Activated CD4-positive, alpha-beta memory T cell treated with anti-CD3 and anti-CD28 coated beads for 36 hours (primary cell): ENCODE measurements at regions of chrX and their contacts with region 1.

Region 1: DNA sequence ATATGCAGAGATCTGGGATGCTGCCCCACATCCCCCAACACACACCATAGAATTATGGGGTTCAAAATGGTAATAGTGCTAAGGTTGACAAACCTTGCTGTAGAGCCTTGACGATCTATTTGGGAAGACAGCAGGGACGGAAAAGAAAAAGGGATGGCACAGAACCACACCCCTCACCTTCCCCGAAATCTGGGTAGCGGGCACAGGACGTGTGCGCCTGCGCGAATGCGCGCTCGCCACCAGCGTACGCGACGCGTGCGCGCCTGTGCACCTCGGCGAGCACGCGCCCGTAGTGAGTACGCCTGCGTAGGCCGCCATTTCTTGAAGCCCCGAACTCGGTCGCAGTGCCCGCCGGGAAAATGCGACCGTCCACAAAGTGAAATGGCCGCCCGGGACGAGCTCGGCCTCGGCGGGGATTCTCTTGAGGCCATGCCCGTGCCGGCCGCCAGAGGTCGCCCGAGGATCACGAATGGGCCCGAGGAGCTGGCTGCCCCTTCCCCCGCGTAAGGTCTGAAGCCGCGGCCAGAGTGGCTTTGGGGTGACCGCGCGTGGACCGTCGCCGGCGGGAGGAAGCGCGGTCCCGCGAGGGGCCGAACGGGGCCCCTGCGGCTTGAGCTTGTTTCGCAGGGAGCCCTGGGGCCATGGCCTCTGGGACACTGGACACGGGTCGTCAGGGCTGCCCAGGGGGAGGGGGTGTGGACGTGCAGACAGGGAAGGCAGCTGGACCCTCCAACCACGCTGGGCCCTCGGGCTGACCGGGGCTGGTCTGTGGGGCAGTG is 43.6 kb downstream of the ZNF185 start:
- DNase-seq: peak; percentile 93
- H3K4me3 Mint-ChIP-seq: peak overlapping the region; percentile 80
- H3K27ac Mint-ChIP-seq: peak overlapping the region; percentile 82
- H3K4me1 Mint-ChIP-seq: peaks cover 2% of the 10 kb centered on the region
- H3K27me3 Mint-ChIP-seq: no peaks in the 10 kb centered on the region

Region 2: DNA sequence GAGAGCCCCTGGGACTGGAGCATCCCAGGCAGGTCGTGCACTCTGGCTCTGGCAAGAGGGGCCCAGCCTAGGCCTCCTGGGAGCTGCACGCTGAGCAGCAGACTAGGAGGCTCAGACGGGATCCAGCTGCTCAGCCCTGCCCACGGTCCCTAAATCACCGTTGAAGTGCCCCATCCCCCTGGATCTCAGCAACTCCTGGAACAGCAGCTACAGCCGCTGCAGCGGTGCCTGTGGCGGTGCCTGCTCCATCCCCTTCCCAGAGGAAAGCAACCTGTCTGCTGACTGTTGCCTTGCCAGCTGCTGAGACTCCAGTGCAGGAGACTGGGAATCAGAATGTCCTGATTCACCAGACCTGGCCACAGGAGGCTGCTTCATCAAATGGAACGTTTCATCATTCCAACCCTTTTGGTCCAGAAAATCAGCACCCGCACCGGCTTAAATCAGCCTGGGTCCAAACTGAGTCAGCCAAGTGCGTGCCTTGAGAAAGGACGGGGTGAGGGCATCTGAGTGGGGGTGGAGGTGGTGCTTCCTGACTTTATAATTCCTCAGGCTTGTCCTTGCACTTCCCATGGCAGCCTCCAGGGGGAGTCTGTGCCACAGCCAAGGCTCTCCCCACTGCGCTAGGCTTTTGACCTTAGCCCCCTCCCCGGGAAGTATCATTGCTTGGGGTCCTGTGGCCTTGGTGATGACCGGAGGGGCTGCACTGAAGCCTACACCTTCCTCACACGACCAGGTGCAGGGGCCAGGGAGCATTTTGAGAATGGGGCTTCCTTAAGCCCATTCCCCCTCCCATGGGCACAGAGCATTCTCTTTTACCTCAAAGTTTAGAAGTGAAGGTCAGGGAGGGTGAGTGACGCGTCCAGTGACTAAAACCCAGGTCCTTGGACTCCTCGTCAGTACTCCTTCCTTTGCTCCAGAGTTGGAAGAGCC is 37.1 kb before region 1 on chrX:
- CTCF ChIA-PET with region 1: no interaction called
- POLR2A ChIA-PET with region 1: no interaction called
- intact Hi-C with region 1: no loop called
- DNase-seq: peak; percentile 50
- H3K4me3 Mint-ChIP-seq: no peak overlapping the region
- H3K27ac Mint-ChIP-seq: no peak overlapping the region
- H3K4me1 Mint-ChIP-seq: no peaks in the 10 kb centered on the region
- H3K27me3 Mint-ChIP-seq: peaks cover 4% of the 10 kb centered on the region

Region 3: GRCh38 chrX:153032397-153033118 is 91.0 kb after region 1 on chrX:
- CTCF ChIA-PET with region 1: interaction called, 8 read pairs
- POLR2A ChIA-PET with region 1: interaction called, 5 read pairs
- intact Hi-C with region 1: loop called (anchors 5 kb)
- DNase-seq: peak; percentile 81
- H3K4me3 Mint-ChIP-seq: peak overlapping the region; percentile 81
- H3K27ac Mint-ChIP-seq: peak overlapping the region; percentile 92
- H3K4me1 Mint-ChIP-seq: peaks cover 9% of the 10 kb centered on the region
- H3K27me3 Mint-ChIP-seq: no peaks in the 10 kb centered on the region

Region 4: GRCh38 chrX:153179131-153179530 is 237.6 kb after region 1 on chrX and contains the start of gene MAGEA1:
- CTCF ChIA-PET with region 1: no interaction called
- POLR2A ChIA-PET with region 1: no interaction called
- intact Hi-C with region 1: no loop called
- DNase-seq: no peak
- H3K4me3 Mint-ChIP-seq: no peak within 1 kb of the TSS
- H3K27ac Mint-ChIP-seq: no peak within 1 kb of the TSS
- H3K4me1 Mint-ChIP-seq: no peaks in the 10 kb centered on the region
- H3K27me3 Mint-ChIP-seq: peaks cover 2% of the 10 kb centered on the region
- total RNA-seq, gene MAGEA1: not detected

Region 5: DNA sequence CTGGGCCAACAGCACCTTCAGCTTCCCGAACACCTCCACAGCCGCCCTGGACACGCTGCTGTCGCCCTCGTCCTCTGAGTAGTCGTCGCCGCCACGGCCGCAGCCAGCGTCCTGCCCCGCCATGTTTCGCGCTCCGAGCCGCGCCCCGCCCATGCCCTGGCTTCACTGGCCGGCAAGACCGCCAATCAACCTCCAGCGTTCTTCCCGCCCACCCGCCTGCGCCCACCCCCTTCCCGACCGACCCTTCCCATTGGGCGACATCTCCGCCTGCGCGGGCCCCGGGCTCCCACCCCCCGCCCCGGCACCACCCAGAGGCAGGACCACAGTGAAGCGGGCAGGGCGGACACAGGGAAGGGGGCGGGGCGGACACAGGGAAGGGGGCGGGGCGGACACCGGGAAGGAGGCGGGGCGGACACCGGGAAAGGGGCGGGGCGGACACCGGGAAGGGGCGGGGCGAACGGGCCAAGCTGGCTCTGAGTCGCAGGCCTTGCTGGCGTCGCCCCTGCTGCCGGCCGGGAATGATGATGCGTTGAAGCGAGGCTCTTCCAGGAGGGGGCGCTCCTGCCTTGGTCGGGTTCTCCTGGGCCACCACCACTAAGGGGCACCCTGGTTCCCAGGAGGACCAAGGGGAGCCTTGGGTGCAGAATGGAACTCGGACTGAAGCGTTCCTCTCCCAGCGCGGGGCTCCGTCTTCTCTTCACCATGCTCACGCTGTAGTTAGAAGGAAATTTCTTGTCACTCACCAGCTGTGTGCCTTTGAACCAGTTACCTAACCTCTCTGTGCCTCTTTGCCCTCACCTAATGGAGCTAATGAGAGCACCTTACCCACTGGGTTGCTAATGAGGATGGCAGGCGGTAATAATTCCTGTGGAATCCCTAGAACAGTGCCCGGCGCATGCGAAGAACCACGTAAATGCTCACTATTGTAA is 529.2 kb after region 1 on chrX and contains the start of gene HAUS7:
- CTCF ChIA-PET with region 1: interaction called, 9 read pairs
- POLR2A ChIA-PET with region 1: no interaction called
- intact Hi-C with region 1: loop called (anchors 1 kb)
- DNase-seq: peak; percentile 92
- H3K4me3 Mint-ChIP-seq: peak within 1 kb of the TSS; percentile 79
- H3K27ac Mint-ChIP-seq: peak within 1 kb of the TSS; percentile 51
- H3K4me1 Mint-ChIP-seq: peaks cover 17% of the 10 kb centered on the region
- H3K27me3 Mint-ChIP-seq: no peaks in the 10 kb centered on the region
- total RNA-seq, gene HAUS7: 59.1 to 62.3 TPM

Region 6: DNA sequence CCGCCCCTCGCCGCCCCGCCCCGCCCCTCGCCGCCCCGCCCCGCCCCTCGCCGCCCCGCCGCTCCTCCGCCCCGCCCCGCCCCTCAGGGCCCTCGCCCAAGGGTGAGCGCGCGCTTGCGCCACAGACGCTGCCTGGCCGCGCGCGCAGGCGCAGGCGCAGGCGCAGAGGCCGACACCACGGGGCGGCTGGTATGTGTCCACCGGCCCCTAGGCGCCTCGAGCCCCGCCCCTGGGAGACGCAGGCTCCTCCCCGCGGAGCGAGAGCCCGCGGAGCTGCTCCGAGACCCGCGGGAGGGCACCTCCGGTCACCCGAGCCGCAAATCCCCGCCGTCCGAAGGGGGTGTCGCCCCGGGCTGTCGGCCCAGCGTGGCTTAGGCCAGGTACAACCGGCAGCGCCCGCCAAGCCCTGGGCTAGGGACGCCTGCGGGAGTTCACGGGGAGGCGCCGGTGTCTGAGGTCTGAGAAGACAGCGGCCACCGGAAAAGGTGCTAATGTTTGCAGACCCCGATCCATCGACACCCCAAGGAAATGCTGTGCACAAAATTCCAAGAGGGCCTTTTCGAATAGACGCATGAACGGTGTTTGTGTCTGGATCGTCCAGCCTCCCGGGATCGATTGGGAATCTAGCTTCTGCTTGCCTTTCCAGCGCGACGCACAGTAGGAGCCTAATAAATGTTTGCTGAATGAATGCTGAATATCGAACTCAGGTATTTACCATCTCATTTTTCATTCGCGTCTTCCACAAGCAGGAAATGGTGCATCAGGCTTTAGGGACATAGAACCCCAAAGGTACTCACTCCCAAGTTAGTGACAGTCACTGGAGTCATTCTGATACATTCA is 657.9 kb after region 1 on chrX:
- CTCF ChIA-PET with region 1: interaction called, 3 read pairs
- POLR2A ChIA-PET with region 1: no interaction called
- intact Hi-C with region 1: loop called (anchors 1 kb)
- DNase-seq: peak; percentile 91
- H3K4me3 Mint-ChIP-seq: peak overlapping the region; percentile 82
- H3K27ac Mint-ChIP-seq: peak overlapping the region; percentile 60
- H3K4me1 Mint-ChIP-seq: peaks cover 41% of the 10 kb centered on the region
- H3K27me3 Mint-ChIP-seq: no peaks in the 10 kb centered on the region